IMR-90 (cell line): ENCODE measurements at regions of chr1 and their contacts with region 1.

Region 1: GRCh38 chr1:167599957-167600581 is 30.0 kb upstream of the RCSD1 start:
- DNase-seq: peak; percentile 22
- ATAC-seq: peak; percentile 73
- H3K4me3 ChIP-seq: no peak overlapping the region
- H3K27ac ChIP-seq: no peak overlapping the region
- H3K4me1 ChIP-seq: no peaks in the 10 kb centered on the region
- H3K27me3 ChIP-seq: peaks cover 5% of the 10 kb centered on the region
- CTCF ChIP-seq: peak; percentile 38
- POLR2A ChIP-seq: no peak
- RAD21 ChIP-seq: peak; percentile 43

Region 2: GRCh38 chr1:167578939-167579521 is 21.0 kb before region 1 on chr1:
- CTCF ChIA-PET with region 1: no interaction called
- POLR2A ChIA-PET with region 1: no interaction called
- dilution Hi-C with region 1: no loop called
- in situ Hi-C with region 1: no loop called
- intact Hi-C with region 1: loop called (anchors 1 kb)
- DNase-seq: no peak
- ATAC-seq: no peak
- H3K4me3 ChIP-seq: no peak overlapping the region
- H3K27ac ChIP-seq: no peak overlapping the region
- H3K4me1 ChIP-seq: no peaks in the 10 kb centered on the region
- H3K27me3 ChIP-seq: peaks cover 11% of the 10 kb centered on the region
- CTCF ChIP-seq: no peak
- POLR2A ChIP-seq: no peak
- RAD21 ChIP-seq: no peak

Region 3: GRCh38 chr1:168161459-168161858 is 561.4 kb after region 1 on chr1:
- CTCF ChIA-PET with region 1: no interaction called
- POLR2A ChIA-PET with region 1: no interaction called
- dilution Hi-C with region 1: no loop called
- in situ Hi-C with region 1: no loop called
- intact Hi-C with region 1: no loop called
- DNase-seq: no peak
- ATAC-seq: no peak
- H3K4me3 ChIP-seq: no peak overlapping the region
- H3K27ac ChIP-seq: no peak overlapping the region
- H3K4me1 ChIP-seq: no peaks in the 10 kb centered on the region
- H3K27me3 ChIP-seq: no peaks in the 10 kb centered on the region; the same call in 1 of the 2 replicates
- CTCF ChIP-seq: no peak
- POLR2A ChIP-seq: no peak
- RAD21 ChIP-seq: no peak

Region 4: DNA sequence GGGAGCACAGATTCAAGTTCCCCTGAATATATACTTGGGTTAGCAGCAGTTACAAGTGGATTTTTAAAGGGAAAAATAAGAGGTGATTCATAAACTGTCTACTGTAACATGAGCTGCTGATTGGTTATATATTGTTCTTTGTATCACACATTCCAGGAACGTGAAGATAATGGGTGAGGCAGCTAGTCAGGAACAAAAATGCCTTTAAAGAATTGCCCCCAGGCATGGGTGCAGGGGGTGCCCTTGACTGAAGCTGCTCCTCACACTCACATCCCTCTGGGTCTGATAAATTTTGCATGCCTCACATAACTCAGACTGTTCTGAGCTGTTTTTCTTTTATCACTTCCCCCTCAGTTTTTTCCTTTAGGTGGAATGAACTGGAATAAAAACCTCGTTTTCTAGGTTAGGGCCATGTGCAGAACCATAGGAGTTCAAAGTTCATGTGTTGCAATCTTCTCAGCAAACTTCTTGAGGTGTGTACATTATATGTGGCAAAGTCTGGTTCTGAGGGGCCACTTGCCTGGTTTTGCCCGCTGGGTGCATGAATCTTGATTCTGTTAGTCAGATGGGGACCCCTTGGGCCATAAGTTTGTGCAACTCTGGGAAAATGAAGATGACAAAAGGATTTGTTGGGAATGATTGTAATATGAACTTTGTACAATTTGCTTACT is 701.7 kb after region 1 on chr1:
- CTCF ChIA-PET with region 1: no interaction called
- POLR2A ChIA-PET with region 1: no interaction called
- dilution Hi-C with region 1: no loop called
- in situ Hi-C with region 1: no loop called
- intact Hi-C with region 1: no loop called
- DNase-seq: peak; percentile 61
- ATAC-seq: peak; percentile 88
- H3K4me3 ChIP-seq: no peak overlapping the region
- H3K27ac ChIP-seq: no peak overlapping the region
- H3K4me1 ChIP-seq: peaks cover 4% of the 10 kb centered on the region
- H3K27me3 ChIP-seq: no peaks in the 10 kb centered on the region
- CTCF ChIP-seq: no peak
- POLR2A ChIP-seq: no peak
- RAD21 ChIP-seq: no peak